Activated naive CD4-positive, alpha-beta T cell treated with anti-CD3 and anti-CD28 coated beads for 36 hours (primary cell): ENCODE measurements at regions of chr7 and their contacts with region 1.

Region 1: DNA sequence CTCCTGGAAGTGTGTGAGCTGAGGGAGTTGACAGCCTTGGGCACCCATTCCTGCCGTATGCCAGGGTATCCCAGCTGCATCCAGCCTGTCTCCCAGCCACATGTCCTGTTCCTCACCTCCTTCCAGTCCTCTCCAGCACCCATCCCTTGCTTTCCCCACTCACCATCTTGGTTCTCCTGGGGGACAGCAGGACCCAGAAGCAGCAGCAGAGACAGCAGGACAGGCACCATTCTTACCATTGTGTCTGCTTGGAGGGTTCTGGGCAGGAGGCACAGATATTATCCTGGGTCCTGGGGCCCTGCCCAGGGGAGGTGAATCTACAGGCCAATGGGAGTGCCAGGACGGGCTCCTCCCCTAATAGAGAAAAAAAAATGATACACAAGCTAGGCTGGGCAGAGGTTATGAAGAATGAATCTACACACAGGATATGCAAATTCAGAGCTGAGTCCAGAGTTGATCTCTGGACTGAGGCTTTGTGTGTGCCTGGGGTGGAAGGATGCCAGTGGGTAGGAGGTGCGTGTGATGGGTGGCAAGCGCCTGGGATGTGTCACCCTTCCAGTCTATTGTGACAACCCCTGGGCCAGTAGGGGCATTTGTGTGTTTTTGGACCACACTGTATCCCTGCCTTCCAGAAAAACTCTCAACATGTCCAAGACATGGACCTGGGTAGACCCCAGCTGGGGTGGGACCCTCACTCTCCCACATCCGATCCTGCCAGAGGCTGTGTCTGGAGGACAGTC is at the start of gene AZGP1:
- DNase-seq: no peak
- H3K4me3 Mint-ChIP-seq: no peak within 1 kb of the TSS
- H3K27ac Mint-ChIP-seq: no peak within 1 kb of the TSS
- H3K4me1 Mint-ChIP-seq: no peaks in the 10 kb centered on the region
- H3K27me3 Mint-ChIP-seq: peaks cover 2% of the 10 kb centered on the region
- total RNA-seq, gene AZGP1: not detected

Region 2: GRCh38 chr7:99910976-99911375 is 65.0 kb before region 1 on chr7:
- CTCF ChIA-PET with region 1: interaction called, 13 read pairs
- intact Hi-C with region 1: loop called (anchors 5 kb)
- DNase-seq: no peak
- H3K4me3 Mint-ChIP-seq: no peak overlapping the region
- H3K27ac Mint-ChIP-seq: no peak overlapping the region
- H3K4me1 Mint-ChIP-seq: peaks cover 41% of the 10 kb centered on the region
- H3K27me3 Mint-ChIP-seq: no peaks in the 10 kb centered on the region

Region 3: GRCh38 chr7:99928994-99929729 is 46.8 kb before region 1 on chr7 and contains the start of gene GJC3:
- CTCF ChIA-PET with region 1: interaction called, 7 read pairs
- intact Hi-C with region 1: loop called (anchors 2 kb)
- DNase-seq: peak; percentile 72
- H3K4me3 Mint-ChIP-seq: peak within 1 kb of the TSS; percentile 66
- H3K27ac Mint-ChIP-seq: peak within 1 kb of the TSS; percentile 46
- H3K4me1 Mint-ChIP-seq: peaks cover 23% of the 10 kb centered on the region
- H3K27me3 Mint-ChIP-seq: no peaks in the 10 kb centered on the region
- total RNA-seq, gene GJC3: 0.62 to 1.1 TPM

Region 4: GRCh38 chr7:100119701-100120467 is 143.9 kb after region 1 on chr7:
- CTCF ChIA-PET with region 1: no interaction called
- intact Hi-C with region 1: no loop called
- DNase-seq: peak; percentile 80
- H3K4me3 Mint-ChIP-seq: peak overlapping the region; percentile 93
- H3K27ac Mint-ChIP-seq: peak overlapping the region; percentile 95
- H3K4me1 Mint-ChIP-seq: peaks cover 24% of the 10 kb centered on the region
- H3K27me3 Mint-ChIP-seq: no peaks in the 10 kb centered on the region